ENCODE measurements at regions of chr6 and their contacts with region 1.

Region 1: DNA sequence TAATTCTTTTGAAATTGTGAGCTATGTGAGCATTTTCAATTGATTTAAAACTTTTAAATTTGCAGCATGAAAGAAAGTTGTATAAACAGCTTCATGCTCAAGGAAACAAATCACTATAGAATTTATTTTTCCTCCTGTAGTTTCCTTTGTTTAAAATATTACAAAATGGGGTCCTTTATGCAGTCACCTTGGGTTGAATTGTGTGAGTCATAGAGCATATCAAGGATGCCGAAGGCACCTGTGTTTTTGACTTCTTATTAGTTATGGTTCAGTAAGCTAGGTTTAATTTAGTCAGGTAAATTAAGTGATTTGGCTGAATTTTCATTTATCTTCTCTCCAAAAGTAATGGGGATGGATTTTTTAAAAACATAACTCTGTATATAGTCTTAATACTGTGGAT is 96.8 kb downstream of the BCKDHB start:
- DNase-seq: no peak
- ATAC-seq: no peak
- H3K4me3 ChIP-seq: no peak overlapping the region
- H3K27ac ChIP-seq: no peak overlapping the region
- H3K4me1 ChIP-seq: no peaks in the 10 kb centered on the region
- H3K27me3 ChIP-seq: no peaks in the 10 kb centered on the region
- CTCF ChIP-seq: no peak

Region 2: DNA sequence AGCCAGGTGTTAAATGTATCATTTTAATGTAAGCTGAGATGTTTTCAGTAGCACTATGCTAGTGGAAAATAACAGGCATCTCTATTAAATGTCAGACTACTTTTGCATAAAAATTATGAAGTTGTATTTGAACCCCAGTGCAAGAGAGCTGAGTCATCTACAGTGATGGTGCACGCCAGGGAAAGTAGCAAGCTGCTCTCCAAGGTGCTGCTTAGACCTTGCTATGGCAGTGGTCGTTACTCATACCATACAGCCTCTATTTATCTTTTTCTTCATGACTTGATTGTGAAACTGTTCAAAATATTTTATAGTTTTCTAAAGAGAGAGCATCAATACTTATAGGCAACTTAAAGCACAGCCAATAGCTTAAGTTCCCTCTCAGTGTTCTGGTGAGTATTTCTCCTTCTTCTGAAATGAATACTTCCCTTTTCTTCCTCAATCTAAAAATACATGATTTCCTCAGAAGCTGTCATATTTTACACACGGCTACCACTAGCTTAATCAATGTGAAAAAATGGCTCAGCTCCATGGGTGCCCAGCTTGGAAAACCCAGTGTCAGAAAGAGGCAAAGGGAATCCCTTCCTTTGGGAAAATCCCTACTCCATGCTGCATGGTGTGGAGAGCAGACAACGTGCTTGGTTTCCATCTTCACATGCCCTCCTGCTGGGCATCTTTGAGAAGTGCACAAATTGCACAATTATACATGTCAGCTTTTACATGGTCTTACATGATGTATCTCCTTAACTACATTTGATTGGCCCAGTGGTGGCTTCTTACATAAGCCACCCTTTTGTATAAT is 361.5 kb before region 1 on chr6:
- CTCF ChIA-PET with region 1: no interaction called
- POLR2A ChIA-PET with region 1: interaction called, 14 read pairs
- in situ Hi-C with region 1: no loop called
- intact Hi-C with region 1: no loop called
- DNase-seq: no peak
- ATAC-seq: no peak
- H3K4me3 ChIP-seq: no peak overlapping the region
- H3K27ac ChIP-seq: no peak overlapping the region
- H3K4me1 ChIP-seq: no peaks in the 10 kb centered on the region
- H3K27me3 ChIP-seq: no peaks in the 10 kb centered on the region
- CTCF ChIP-seq: no peak

Measured in Panc1 (cell line).